Psoas muscle (tissue), 8 donors: ENCODE measurements at regions of chr11 and their contacts with region 1.

Region 1: GRCh38 chr11:108912581-108912980 is 247.7 kb downstream of the DDX10 start:
- DNase-seq: no peak
- ATAC-seq: no peak
- H3K4me3 ChIP-seq: no peak overlapping the region
- H3K27ac ChIP-seq: no peak overlapping the region
- H3K4me1 ChIP-seq: peaks cover 20% of the 10 kb centered on the region
- H3K27me3 ChIP-seq: no peaks in the 10 kb centered on the region
- CTCF ChIP-seq: no peak

Region 2: DNA sequence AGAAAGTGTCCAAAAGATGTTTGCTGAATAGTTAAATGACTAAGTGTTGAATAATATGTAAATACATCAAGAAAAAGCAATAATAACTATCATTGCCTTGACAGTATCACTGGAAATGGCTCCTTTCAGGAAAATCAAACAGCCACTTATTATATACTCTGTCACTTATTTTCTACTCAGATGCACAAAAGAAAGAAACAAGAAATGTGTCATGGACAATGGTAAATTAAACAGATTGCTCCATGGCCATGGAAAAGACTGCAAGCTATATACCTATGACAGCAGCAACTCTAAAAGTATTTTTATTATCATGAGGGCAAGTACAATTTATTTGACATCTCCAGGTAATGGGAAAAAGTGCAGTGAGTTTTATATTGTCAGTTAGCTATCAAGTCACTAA is 1841.5 kb before region 1 on chr11:
- intact Hi-C with region 1: loop called in 1 of 2 experiments (anchors 10 kb)
- DNase-seq: no peak
- ATAC-seq: no peak
- H3K4me3 ChIP-seq: no peak overlapping the region
- H3K27ac ChIP-seq: no peak overlapping the region
- H3K4me1 ChIP-seq: no peaks in the 10 kb centered on the region
- H3K27me3 ChIP-seq: no peaks in the 10 kb centered on the region
- CTCF ChIP-seq: no peak

Region 3: DNA sequence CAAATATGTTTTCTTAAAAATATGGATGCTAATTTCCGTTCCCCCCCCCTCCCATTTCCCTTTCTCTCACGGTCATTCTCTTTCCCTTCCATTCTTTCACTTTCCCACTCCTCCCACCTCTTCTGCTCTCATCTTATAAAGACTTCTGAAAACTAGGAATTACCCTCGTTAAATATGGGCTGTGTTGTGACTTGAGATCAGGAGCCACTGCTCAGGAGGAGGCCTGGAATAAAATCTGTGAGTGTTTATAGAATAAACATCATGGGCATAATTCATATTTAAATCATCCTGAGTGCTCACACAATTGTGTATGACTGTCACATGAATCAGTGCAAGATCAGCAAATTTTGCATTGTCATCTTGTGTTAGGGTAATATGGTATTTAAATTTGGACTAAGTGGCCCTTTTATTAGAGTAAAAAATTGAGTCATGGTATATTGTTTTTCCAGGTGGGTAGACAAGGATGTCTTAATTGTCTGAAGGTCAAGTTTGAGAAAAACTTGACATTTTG is 39.7 kb before region 1 on chr11:
- intact Hi-C with region 1: no loop called
- DNase-seq: no peak
- ATAC-seq: no peak
- H3K4me3 ChIP-seq: no peak overlapping the region
- H3K27ac ChIP-seq: no peak overlapping the region
- H3K4me1 ChIP-seq: no peaks in the 10 kb centered on the region
- H3K27me3 ChIP-seq: no peaks in the 10 kb centered on the region
- CTCF ChIP-seq: no peak